Mammary epithelial cell (primary cell): ENCODE measurements at regions of chr16 and their contacts with region 1.

Region 1: DNA sequence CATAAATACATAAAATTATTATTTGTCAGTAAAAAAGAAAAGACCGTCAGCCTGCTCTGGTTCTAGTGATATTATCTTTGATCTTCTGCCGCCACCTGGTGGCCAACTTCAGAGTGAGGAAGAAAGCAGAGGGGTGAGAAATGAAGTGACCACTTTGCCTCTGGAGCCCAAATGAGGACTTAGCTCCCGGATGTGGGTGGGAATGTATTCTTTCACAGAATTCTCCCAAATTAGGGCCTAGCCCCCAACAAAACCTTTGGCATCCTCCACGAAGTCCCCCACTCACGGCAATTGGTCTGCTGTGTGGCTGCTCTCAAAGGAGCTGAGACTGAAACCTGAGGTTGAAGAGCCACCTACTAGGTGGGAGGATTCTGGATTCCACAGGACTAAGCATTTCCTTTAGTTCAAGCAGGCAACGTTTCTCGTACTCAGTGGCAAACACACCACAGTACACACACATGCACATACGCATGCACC is 4.9 kb upstream of the ZNF267 start:
- DNase-seq: peak; percentile 51
- H3K4me3 ChIP-seq: no peak overlapping the region
- H3K27ac ChIP-seq: no peak overlapping the region
- H3K4me1 ChIP-seq: peaks cover 11% of the 10 kb centered on the region
- H3K27me3 ChIP-seq: no peaks in the 10 kb centered on the region
- CTCF ChIP-seq: peak; percentile 65 to 72

Region 2: GRCh38 chr16:30957456-30958174 is 911.1 kb before region 1 on chr16 and contains the start of gene SETD1A:
- CTCF ChIA-PET with region 1: no interaction called
- dilution Hi-C with region 1: no loop called
- in situ Hi-C with region 1: no loop called
- intact Hi-C with region 1: loop called (anchors 10 kb)
- DNase-seq: peak; percentile 93
- H3K4me3 ChIP-seq: peak within 1 kb of the TSS; percentile 91 to 95 (median 93)
- H3K27ac ChIP-seq: peak within 1 kb of the TSS; percentile 91
- H3K4me1 ChIP-seq: peaks cover 15% of the 10 kb centered on the region
- H3K27me3 ChIP-seq: no peaks in the 10 kb centered on the region
- CTCF ChIP-seq: no peak
- total RNA-seq, gene SETD1A: 8.5 to 14.8 TPM

Region 3: DNA sequence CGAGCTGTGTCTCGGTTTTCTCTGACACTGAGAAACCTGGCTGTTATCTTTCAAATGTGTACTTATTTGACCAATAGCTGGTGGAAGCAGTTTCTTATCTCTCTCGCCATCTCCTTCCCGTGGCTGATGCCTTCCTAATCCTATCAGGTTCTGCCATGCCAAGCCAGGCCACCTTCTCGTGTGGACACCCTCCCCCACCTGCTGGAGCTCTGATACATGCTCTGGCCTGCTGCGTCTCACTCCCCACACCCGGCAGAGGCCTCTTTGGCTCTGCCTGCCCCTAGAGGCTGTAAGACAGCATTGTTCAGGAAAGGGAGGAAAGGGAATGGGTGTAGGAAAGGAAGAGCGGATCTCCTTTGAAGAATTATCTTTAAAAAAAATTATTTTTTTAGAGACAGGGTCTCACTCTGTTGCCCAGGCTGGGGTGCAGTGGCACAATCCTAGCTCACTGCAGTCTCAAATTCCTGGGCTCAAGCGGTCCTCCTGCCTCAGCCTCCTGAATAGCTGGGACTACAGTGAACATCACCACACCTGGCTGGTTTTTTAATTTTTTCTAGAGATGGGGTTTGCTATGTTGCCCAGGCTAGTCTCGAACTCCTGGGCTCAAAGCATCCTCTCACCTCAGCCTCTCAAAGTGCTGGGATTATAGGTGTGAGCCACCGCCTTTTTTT is 416.9 kb before region 1 on chr16:
- CTCF ChIA-PET with region 1: interaction called, 5 read pairs
- dilution Hi-C with region 1: no loop called
- in situ Hi-C with region 1: loop called (anchors 10 to 25 kb)
- intact Hi-C with region 1: loop called (anchors 5 kb)
- DNase-seq: peak; percentile 69
- H3K4me3 ChIP-seq: no peak overlapping the region
- H3K27ac ChIP-seq: peak overlapping the region; percentile 75
- H3K4me1 ChIP-seq: peaks cover 40% of the 10 kb centered on the region
- H3K27me3 ChIP-seq: no peaks in the 10 kb centered on the region
- CTCF ChIP-seq: peak; percentile 72 to 90

Region 4: GRCh38 chr16:31472709-31473203 is 396.0 kb before region 1 on chr16:
- CTCF ChIA-PET with region 1: no interaction called
- dilution Hi-C with region 1: no loop called
- in situ Hi-C with region 1: loop called in 1 of 2 experiments (anchors 25 kb)
- intact Hi-C with region 1: loop called (anchors 2 kb)
- DNase-seq: peak; percentile 90
- H3K4me3 ChIP-seq: peak overlapping the region; percentile 60 to 72 (median 69)
- H3K27ac ChIP-seq: peak overlapping the region; percentile 40
- H3K4me1 ChIP-seq: peaks cover 8% of the 10 kb centered on the region
- H3K27me3 ChIP-seq: no peaks in the 10 kb centered on the region
- CTCF ChIP-seq: peak; percentile 84

Region 5: DNA sequence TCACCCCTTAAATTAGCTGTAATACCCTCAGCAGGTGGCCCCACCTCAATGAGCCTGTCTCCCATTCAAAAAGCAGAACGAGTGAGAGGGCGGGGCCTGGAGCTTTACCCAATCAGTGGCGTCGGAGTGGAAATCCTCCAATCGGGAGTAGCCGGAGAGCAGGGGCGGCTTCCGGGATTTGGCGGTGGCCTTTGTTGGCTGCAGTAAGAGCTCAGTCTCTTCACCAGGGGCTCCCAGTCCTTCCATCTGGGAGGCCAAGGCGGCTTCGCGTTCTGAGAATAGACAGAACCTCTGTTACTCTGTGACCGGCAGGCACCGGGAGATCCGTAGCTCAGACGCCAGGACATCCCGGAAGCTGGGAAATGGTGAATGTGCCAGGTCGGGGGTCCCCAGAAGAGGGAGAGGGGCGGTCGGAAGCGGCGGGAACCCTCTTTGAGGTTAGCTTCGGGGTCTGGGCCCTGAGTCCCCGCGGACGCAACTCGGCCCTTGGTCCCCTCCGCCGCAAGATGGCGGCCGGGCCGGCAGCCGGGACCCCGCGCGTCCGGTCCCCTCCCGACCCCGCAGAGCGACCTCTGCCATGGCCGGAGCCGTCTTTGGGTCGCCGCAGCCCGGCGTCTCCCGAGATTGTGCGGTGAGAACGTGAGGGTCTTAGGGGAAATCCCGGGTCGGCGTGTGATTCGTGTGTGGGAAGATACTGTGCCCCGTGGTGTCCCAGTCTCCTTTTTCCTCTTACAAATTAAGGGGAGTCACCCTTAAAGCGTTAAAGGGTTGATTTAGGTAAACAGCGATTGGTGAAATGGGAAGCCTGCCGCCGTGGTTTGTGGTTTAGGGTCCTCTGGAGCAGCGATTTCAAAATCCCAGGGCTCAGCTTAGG is 155.4 kb before region 1 on chr16:
- CTCF ChIA-PET with region 1: no interaction called
- dilution Hi-C with region 1: no loop called
- in situ Hi-C with region 1: no loop called
- intact Hi-C with region 1: loop called (anchors 2 kb)
- DNase-seq: peak; percentile 90
- H3K4me3 ChIP-seq: peak overlapping the region; percentile 90 to 98 (median 94)
- H3K27ac ChIP-seq: peak overlapping the region; percentile 89
- H3K4me1 ChIP-seq: peaks cover 15% of the 10 kb centered on the region
- H3K27me3 ChIP-seq: no peaks in the 10 kb centered on the region
- CTCF ChIP-seq: no peak

Region 6: GRCh38 chr16:31833047-31833446 is 35.7 kb before region 1 on chr16:
- CTCF ChIA-PET with region 1: no interaction called
- dilution Hi-C with region 1: no loop called
- in situ Hi-C with region 1: no loop called
- intact Hi-C with region 1: no loop called
- DNase-seq: no peak
- H3K4me3 ChIP-seq: no peak overlapping the region
- H3K27ac ChIP-seq: no peak overlapping the region
- H3K4me1 ChIP-seq: no peaks in the 10 kb centered on the region
- H3K27me3 ChIP-seq: no peaks in the 10 kb centered on the region
- CTCF ChIP-seq: no peak